ENCODE measurements at regions of chr1 and their contacts with region 1.

Region 1: GRCh38 chr1:11907275-11908094 is 18.7 kb downstream of the KIAA2013 start:
- DNase-seq: peak; percentile 94
- ATAC-seq: peak; percentile 65
- H3K4me3 Mint-ChIP-seq: peak overlapping the region; percentile 90
- H3K27ac Mint-ChIP-seq: peak overlapping the region; percentile 96
- H3K4me1 Mint-ChIP-seq: peaks cover 29% of the 10 kb centered on the region
- H3K27me3 Mint-ChIP-seq: peaks cover 14% of the 10 kb centered on the region
- CTCF ChIP-seq: peak; percentile 65

Region 2: GRCh38 chr1:11735854-11736745 is 171.4 kb before region 1 on chr1 and contains the start of gene AGTRAP:
- CTCF ChIA-PET with region 1: interaction called, 3 read pairs
- POLR2A ChIA-PET with region 1: interaction called, 57 read pairs
- intact Hi-C with region 1: no loop called
- DNase-seq: peak; percentile 94
- ATAC-seq: peak; percentile 79
- H3K4me3 Mint-ChIP-seq: peak within 1 kb of the TSS; percentile 95
- H3K27ac Mint-ChIP-seq: peak within 1 kb of the TSS; percentile 91
- H3K4me1 Mint-ChIP-seq: peaks cover 50% of the 10 kb centered on the region
- H3K27me3 Mint-ChIP-seq: no peaks in the 10 kb centered on the region
- CTCF ChIP-seq: peak; percentile 25
- total RNA-seq, gene AGTRAP: 8.9 to 9.4 TPM

Region 3: DNA sequence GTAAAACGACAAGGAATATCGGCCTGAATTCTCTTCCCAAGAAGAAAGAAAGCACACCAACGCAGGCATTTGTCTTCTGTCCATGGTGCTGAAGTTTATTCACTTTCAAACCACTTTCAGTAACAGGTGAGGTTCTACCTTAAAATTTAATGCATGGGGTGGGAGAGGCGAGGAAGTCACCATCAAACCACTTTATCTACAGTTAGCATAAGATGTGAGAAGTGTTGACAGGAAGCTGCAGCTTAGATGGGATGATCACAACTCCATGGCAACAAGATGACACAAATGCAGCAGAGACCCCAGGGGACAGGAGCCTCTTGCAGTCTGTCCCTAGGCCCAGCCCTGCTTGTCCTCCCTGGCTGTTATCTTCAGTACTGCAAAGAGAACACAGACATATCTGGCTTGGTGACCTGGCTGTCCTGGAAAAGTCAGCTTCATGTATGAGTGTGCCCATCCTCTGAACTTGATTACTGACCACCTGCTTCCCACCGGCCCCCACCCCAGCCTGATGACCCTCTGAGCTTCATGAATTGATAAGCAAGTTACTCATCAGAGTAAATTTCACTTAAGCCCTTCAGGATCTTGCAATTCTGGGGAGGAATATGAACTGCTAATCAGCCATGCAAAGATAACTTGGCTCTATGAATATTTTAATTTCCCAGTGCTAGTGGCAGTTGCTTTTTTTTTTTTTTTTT is 61.7 kb before region 1 on chr1:
- CTCF ChIA-PET with region 1: interaction called, 4 read pairs
- POLR2A ChIA-PET with region 1: interaction called, 111 read pairs
- intact Hi-C with region 1: no loop called
- DNase-seq: no peak
- ATAC-seq: no peak
- H3K4me3 Mint-ChIP-seq: no peak overlapping the region
- H3K27ac Mint-ChIP-seq: no peak overlapping the region
- H3K4me1 Mint-ChIP-seq: no peaks in the 10 kb centered on the region
- H3K27me3 Mint-ChIP-seq: no peaks in the 10 kb centered on the region
- CTCF ChIP-seq: no peak

Region 4: GRCh38 chr1:11934302-11935056 is 27.0 kb after region 1 on chr1 and contains the start of gene PLOD1:
- CTCF ChIA-PET with region 1: interaction called, 3 read pairs
- POLR2A ChIA-PET with region 1: interaction called, 263 read pairs
- intact Hi-C with region 1: no loop called
- DNase-seq: peak; percentile 88
- ATAC-seq: peak; percentile 98
- H3K4me3 Mint-ChIP-seq: peak within 1 kb of the TSS; percentile 80
- H3K27ac Mint-ChIP-seq: peak within 1 kb of the TSS; percentile 75
- H3K4me1 Mint-ChIP-seq: peaks cover 2% of the 10 kb centered on the region
- H3K27me3 Mint-ChIP-seq: no peaks in the 10 kb centered on the region
- CTCF ChIP-seq: no peak
- total RNA-seq, gene PLOD1: 21.5 to 22.0 TPM

Region 5: DNA sequence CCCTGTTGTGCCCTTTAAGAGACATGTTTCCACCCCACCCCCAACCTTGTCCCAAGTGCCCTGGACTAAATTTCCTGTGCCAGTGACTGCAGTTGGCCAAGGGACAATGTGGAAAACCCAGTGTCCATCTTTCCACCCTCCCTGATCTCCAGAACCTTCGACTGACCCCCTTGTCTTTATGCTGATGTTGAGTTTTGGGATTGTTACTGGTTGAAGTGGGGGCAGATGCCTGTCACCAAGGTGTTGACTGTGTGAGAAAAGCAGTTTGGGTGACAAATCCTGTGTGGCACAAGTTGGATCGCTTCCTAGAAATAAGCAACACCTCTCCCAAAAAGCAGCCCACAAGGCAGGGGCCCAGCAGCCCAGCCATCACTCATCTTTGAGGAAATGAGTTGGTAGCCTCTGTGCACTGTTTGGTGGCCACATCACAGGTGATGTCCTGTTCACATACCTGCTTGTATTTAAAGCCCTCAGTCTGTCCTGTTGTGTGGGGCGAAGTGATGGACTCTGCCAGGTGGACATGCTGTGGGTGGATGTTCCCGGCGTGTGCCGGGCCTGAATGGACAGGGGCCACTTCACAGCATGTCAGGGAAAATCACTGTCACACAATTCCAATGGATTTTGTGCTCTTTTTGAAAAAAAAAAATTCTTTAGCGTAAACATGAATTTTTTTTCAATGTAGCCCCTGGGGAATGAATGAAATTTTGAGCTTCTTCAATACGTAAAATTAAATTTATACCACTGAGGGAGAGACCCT is 105.3 kb after region 1 on chr1:
- CTCF ChIA-PET with region 1: no interaction called
- POLR2A ChIA-PET with region 1: interaction called, 23 read pairs
- intact Hi-C with region 1: no loop called
- DNase-seq: peak; percentile 31
- ATAC-seq: peak; percentile 26
- H3K4me3 Mint-ChIP-seq: no peak overlapping the region
- H3K27ac Mint-ChIP-seq: peak overlapping the region; percentile 78
- H3K4me1 Mint-ChIP-seq: peaks cover 23% of the 10 kb centered on the region
- H3K27me3 Mint-ChIP-seq: no peaks in the 10 kb centered on the region
- CTCF ChIP-seq: no peak

Region 6: GRCh38 chr1:12078938-12079861 is 171.7 kb after region 1 on chr1:
- CTCF ChIA-PET with region 1: no interaction called
- POLR2A ChIA-PET with region 1: interaction called, 32 read pairs
- intact Hi-C with region 1: no loop called
- DNase-seq: peak; percentile 75
- ATAC-seq: peak; percentile 79
- H3K4me3 Mint-ChIP-seq: no peak overlapping the region
- H3K27ac Mint-ChIP-seq: peak overlapping the region; percentile 20
- H3K4me1 Mint-ChIP-seq: peaks cover 22% of the 10 kb centered on the region
- H3K27me3 Mint-ChIP-seq: peaks cover 2% of the 10 kb centered on the region
- CTCF ChIP-seq: peak; percentile 75

Region 7: GRCh38 chr1:12356004-12356890 is 448.8 kb after region 1 on chr1:
- CTCF ChIA-PET with region 1: no interaction called
- POLR2A ChIA-PET with region 1: no interaction called
- intact Hi-C with region 1: no loop called
- DNase-seq: no peak
- ATAC-seq: no peak
- H3K4me3 Mint-ChIP-seq: no peak overlapping the region
- H3K27ac Mint-ChIP-seq: no peak overlapping the region
- H3K4me1 Mint-ChIP-seq: no peaks in the 10 kb centered on the region
- H3K27me3 Mint-ChIP-seq: no peaks in the 10 kb centered on the region
- CTCF ChIP-seq: no peak